Activated CD4-positive, alpha-beta T cell treated with anti-CD3 and anti-CD28 coated beads, Interleukin-2, amount 10 ng/mL, durations not matched to agents 24 days and 14 days (primary cell): ENCODE measurements at regions of chr1 and their contacts with region 1.

Region 1: GRCh38 chr1:115112496-115113375 is 23.4 kb upstream of the TSPAN2 start:
- DNase-seq: peak; percentile 85
- H3K4me3 Mint-ChIP-seq: no peak overlapping the region
- H3K27ac Mint-ChIP-seq: no peak overlapping the region
- H3K4me1 Mint-ChIP-seq: peaks cover 2% of the 10 kb centered on the region
- H3K27me3 Mint-ChIP-seq: peaks cover 1% of the 10 kb centered on the region

Region 2: GRCh38 chr1:114581335-114582287 is 531.1 kb before region 1 on chr1 and contains the start of gene BCAS2:
- intact Hi-C with region 1: no loop called
- DNase-seq: peak; percentile 98
- H3K4me3 Mint-ChIP-seq: peak within 1 kb of the TSS; percentile 95
- H3K27ac Mint-ChIP-seq: peak within 1 kb of the TSS; percentile 93
- H3K4me1 Mint-ChIP-seq: peaks cover 19% of the 10 kb centered on the region
- H3K27me3 Mint-ChIP-seq: peaks cover 9% of the 10 kb centered on the region
- total RNA-seq, gene BCAS2: 63.5 and 64.0 TPM in 2 replicates

Region 3: GRCh38 chr1:115052454-115053083 is 60.2 kb before region 1 on chr1:
- intact Hi-C with region 1: loop called (anchors 5 kb)
- DNase-seq: peak; percentile 85
- H3K4me3 Mint-ChIP-seq: no peak overlapping the region
- H3K27ac Mint-ChIP-seq: no peak overlapping the region
- H3K4me1 Mint-ChIP-seq: peaks cover 7% of the 10 kb centered on the region
- H3K27me3 Mint-ChIP-seq: peaks cover 8% of the 10 kb centered on the region

Region 4: GRCh38 chr1:115073298-115074087 is 39.2 kb before region 1 on chr1:
- intact Hi-C with region 1: no loop called
- DNase-seq: no peak
- H3K4me3 Mint-ChIP-seq: no peak overlapping the region
- H3K27ac Mint-ChIP-seq: no peak overlapping the region
- H3K4me1 Mint-ChIP-seq: peaks cover 10% of the 10 kb centered on the region
- H3K27me3 Mint-ChIP-seq: peaks cover 19% of the 10 kb centered on the region

Region 5: DNA sequence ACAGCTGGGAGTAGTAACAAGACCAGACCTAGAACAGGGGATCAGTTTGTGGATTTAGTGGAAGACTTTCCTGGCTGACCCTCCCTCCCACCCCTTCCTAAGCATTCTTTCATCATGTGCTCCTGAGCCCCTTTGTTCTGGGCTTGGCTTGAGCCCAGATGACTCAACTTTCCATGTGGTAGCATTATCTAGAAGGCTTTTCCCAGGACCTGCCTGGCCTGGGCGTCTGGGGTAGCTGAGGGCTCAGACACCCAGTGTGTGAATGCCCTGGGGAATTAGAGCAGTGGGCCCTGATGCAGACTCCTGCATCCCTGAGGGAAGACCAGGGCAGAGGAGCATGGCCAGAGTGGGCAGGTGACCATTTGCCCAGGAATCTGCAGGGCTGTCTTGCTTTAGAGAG is 20.7 kb after region 1 on chr1:
- intact Hi-C with region 1: no loop called
- DNase-seq: no peak
- H3K4me3 Mint-ChIP-seq: no peak overlapping the region
- H3K27ac Mint-ChIP-seq: no peak overlapping the region
- H3K4me1 Mint-ChIP-seq: no peaks in the 10 kb centered on the region
- H3K27me3 Mint-ChIP-seq: peaks cover 2% of the 10 kb centered on the region